OCI-LY7 (cell line): ENCODE measurements at regions of chr7 and their contacts with region 1.

Region 1: DNA sequence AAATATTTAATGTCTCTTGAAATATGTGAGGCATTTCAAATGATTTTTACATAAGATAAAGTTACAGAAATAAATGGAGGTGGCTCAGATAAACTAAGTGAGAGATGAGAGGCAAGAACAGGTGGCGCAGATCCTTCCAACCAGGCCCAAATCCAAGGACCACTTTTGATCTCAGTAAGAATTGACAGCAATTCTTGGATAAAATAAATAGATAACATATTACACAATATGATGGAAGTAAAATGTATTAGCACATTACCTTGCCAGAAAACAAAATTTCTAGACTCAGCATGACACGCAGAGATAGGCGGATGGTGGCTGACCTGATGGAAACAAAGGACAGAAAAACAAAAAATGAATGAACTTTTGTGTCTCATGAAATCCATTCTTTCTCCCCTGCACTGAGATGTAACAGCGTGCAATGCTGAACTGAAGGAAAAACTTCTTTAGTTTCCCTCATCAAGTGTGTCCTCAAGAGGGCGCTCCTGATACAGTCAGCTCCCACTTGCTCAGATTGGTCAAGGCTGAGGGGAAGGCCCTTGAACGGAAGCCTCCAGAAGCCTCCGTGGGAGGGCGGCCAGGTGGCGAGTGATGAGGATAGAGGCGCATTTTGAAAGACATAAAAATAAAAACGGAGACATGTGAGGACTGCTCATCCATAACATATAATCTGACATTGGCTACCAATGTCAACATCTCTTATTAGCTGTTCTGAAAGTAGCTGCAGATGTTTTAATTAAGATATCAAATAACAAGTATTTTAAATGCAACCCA is 62.8 kb upstream of the GSDME start:
- DNase-seq: peak; percentile 95
- H3K4me3 ChIP-seq: peak overlapping the region; percentile 48
- H3K27ac ChIP-seq: peak overlapping the region; percentile 98
- H3K4me1 ChIP-seq: peaks cover 52% of the 10 kb centered on the region
- CTCF ChIP-seq: peak; percentile 97

Region 2: DNA sequence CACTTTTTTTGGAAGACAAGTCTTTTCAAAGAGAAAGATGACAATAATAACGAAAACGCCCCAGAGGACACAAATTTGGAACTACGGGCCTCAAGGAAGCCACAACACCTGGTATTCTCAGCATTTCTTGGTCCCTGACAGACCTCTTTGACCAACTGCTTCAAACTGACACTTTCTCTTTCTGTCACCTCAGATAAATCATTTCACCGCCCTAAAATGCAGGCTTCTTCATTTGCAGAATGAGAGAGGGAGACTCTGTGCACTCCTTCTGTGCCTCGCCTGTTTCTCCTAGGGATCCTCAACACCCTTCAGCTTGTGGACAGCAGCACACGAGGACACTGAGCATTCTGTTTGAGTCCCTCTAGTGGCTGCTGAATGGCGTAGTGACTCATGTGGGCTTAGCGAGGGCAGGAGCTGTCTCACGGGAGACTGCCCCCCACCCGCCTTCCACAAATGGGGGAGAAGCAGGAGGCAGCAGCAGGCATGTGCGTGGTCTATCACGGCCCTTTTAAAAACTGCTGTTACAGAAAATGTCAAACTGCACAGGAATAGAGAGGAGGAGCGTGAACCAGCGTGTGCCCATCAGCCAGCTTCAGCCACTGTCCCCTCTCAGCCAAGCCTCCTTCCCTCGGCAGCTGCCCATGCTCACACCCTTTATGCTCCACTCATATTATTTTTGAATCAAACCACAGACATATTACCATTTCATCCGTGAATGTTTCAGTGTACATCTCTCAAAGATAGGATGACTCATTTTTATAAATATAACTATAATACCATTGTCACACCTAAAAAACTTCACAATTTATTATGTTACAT is 104.2 kb before region 1 on chr7:
- CTCF ChIA-PET with region 1: no interaction called
- POLR2A ChIA-PET with region 1: interaction called, 7 read pairs
- intact Hi-C with region 1: loop called (anchors 5 kb)
- DNase-seq: peak; percentile 90
- H3K4me3 ChIP-seq: peak overlapping the region; percentile 53
- H3K27ac ChIP-seq: peak overlapping the region; percentile 93
- H3K4me1 ChIP-seq: peaks cover 75% of the 10 kb centered on the region
- CTCF ChIP-seq: peak; percentile 69

Region 3: DNA sequence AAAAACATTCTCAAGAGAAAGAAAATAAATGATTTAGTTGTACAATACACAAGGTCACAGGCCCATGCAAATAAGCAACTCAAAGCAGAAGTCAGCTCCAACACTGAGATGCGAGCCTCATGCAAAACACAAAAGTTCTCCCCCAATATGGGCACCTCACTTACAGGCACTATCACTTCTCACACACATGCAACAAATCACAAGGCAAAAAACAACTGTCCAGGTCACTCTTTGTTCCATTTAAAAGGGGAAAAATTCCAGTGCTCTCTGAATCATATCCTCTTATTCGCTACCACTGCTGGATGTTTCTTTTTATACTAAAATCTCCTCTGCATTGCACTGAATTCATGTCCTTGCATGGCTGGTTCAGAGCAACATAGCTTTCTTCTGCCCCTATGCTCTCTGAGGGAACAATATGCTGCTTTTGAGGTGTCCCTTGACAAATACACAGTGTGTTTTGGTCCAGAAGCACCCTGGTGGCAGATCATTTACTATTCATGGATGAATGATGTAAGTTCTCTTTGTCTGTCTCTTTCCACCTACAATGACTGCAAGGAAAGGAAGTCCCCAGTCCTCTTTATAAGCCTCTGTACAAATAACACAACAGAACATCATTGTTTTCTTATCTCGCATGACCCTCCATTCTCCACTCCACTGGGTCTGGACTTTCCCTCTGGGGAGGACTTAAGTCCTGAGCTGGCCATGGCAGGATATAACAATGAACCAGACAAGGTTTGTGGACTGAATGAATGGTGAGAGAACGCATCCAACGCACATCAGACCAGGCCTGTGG is 22.5 kb after region 1 on chr7:
- CTCF ChIA-PET with region 1: interaction called, 5 read pairs
- POLR2A ChIA-PET with region 1: interaction called, 16 read pairs
- intact Hi-C with region 1: loop called (anchors 1 kb)
- DNase-seq: peak; percentile 71
- H3K4me3 ChIP-seq: peak overlapping the region; percentile 65
- H3K27ac ChIP-seq: peak overlapping the region; percentile 92
- H3K4me1 ChIP-seq: peaks cover 96% of the 10 kb centered on the region
- CTCF ChIP-seq: 0 out of 2 replicates have a peak, but pooled peaks have one; percentile 23

Region 4: GRCh38 chr7:24877790-24878311 is 57.7 kb after region 1 on chr7:
- CTCF ChIA-PET with region 1: interaction called, 3 read pairs
- POLR2A ChIA-PET with region 1: interaction called, 32 read pairs
- intact Hi-C with region 1: loop called (anchors 1 kb)
- DNase-seq: peak; percentile 94
- H3K4me3 ChIP-seq: peak overlapping the region; percentile 51
- H3K27ac ChIP-seq: peak overlapping the region; percentile 93
- H3K4me1 ChIP-seq: peaks cover 98% of the 10 kb centered on the region
- CTCF ChIP-seq: no peak

Region 5: DNA sequence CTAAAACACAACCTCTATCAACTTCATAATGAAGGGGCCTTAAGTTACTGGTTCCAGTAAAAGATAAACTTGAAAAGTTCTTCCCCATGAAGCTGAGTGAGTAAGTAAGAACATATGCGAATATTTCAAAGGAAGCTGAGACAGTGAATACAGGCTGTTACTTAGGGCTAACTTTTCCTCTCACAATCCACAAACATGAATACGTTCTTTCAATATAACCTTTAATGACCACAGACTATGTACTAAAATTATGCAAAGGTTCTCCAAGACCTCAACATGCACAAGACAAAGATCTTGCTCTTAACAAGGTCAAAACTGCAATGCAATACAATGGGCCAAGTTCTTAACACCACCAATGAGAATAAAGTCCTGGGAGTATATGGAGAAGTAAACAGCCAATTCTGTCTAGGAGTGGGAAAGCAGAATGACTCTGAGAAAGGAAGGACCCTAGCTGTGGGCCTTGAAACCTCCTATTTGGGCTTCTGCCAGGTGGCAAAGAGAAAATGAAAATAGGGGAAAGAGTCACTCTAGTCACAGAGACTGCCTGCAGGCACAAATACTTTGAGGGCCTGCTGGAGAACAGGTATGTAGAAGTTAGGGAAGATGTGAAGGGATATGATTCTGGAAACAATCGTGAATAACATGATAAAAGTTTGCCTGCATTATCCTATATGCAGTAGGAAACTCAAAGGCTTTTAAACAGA is 116.2 kb after region 1 on chr7:
- CTCF ChIA-PET with region 1: no interaction called
- POLR2A ChIA-PET with region 1: interaction called, 3 read pairs
- intact Hi-C with region 1: loop called (anchors 1 kb)
- DNase-seq: no peak
- H3K4me3 ChIP-seq: no peak overlapping the region
- H3K27ac ChIP-seq: peak overlapping the region; percentile 27
- H3K4me1 ChIP-seq: peaks cover 82% of the 10 kb centered on the region
- CTCF ChIP-seq: no peak

Region 6: GRCh38 chr7:25093268-25093826 is 273.2 kb after region 1 on chr7:
- CTCF ChIA-PET with region 1: interaction called, 3 read pairs
- POLR2A ChIA-PET with region 1: interaction called, 8 read pairs
- intact Hi-C with region 1: loop called (anchors 1 kb)
- DNase-seq: peak; percentile 86
- H3K4me3 ChIP-seq: no peak overlapping the region
- H3K27ac ChIP-seq: no peak overlapping the region
- H3K4me1 ChIP-seq: peaks cover 41% of the 10 kb centered on the region
- CTCF ChIP-seq: peak; percentile 97